Pancreas (tissue), 10 donors: ENCODE measurements at regions of chr2 and their contacts with region 1.

Region 1: GRCh38 chr2:96540136-96540535 is 3.6 kb downstream of the ARID5A start:
- DNase-seq: no peak
- ATAC-seq: no peak
- H3K4me3 ChIP-seq: no peak overlapping the region
- H3K27ac ChIP-seq: no peak overlapping the region
- H3K4me1 ChIP-seq: peaks cover 0 to 6% (median 0%) of the 10 kb centered on the region in 3 donors
- H3K27me3 ChIP-seq: no peaks in the 10 kb centered on the region
- CTCF ChIP-seq: no peak

Region 2: GRCh38 chr2:96951093-96951654 is 411.0 kb after region 1 on chr2:
- intact Hi-C with region 1: loop called in 1 of 3 experiments (anchors 10 kb)
- DNase-seq: peak; percentile 50 to 93 (median 81)
- ATAC-seq: peak; percentile 91 to 97 (median 97)
- H3K4me3 ChIP-seq: no peak overlapping the region
- H3K27ac ChIP-seq: no peak overlapping the region
- H3K4me1 ChIP-seq: peaks cover 0 to 4% (median 0%) of the 10 kb centered on the region in 3 donors
- H3K27me3 ChIP-seq: no peaks in the 10 kb centered on the region
- CTCF ChIP-seq: peak; percentile 79 to 90 (median 86)